HepG2 (cell line): ENCODE measurements at regions of chr13 and their contacts with region 1.

Region 1: GRCh38 chr13:25574437-25575411 is 202.9 kb downstream of the ATP8A2 start:
- DNase-seq: peak; percentile 74
- ATAC-seq: peak; percentile 97
- H3K4me3 ChIP-seq: no peak overlapping the region
- H3K27ac ChIP-seq: no peak overlapping the region
- H3K4me1 ChIP-seq: no peaks in the 10 kb centered on the region
- H3K27me3 ChIP-seq: 0 out of 5 replicates have a peak, but pooled peaks cover 2 to 3% of the 10 kb centered on the region in 2 experiments
- CTCF ChIP-seq: peak; percentile 83
- EP300 ChIP-seq: no peak
- POLR2A ChIP-seq: no peak
- RAD21 ChIP-seq: peak; percentile 61; the same call in 1 of the 2 replicates

Region 2: GRCh38 chr13:26062844-26063444 is 488.2 kb after region 1 on chr13:
- CTCF ChIA-PET with region 1: interaction called, 13 read pairs
- POLR2A ChIA-PET with region 1: no interaction called
- in situ Hi-C with region 1: loop called (anchors 5 kb)
- intact Hi-C with region 1: loop called (anchors 1 kb)
- DNase-seq: peak; percentile 59
- ATAC-seq: peak; percentile 76
- H3K4me3 ChIP-seq: no peak overlapping the region
- H3K27ac ChIP-seq: no peak overlapping the region
- H3K4me1 ChIP-seq: no peaks in the 10 kb centered on the region
- H3K27me3 ChIP-seq: peaks cover 1 to 17% of the 10 kb centered on the region in 2 experiments; a peak in 2 of 5 replicates
- CTCF ChIP-seq: peak; percentile 63
- EP300 ChIP-seq: no peak
- POLR2A ChIP-seq: no peak
- RAD21 ChIP-seq: 0 out of 2 replicates have a peak, but pooled peaks have one; percentile 13

Region 3: DNA sequence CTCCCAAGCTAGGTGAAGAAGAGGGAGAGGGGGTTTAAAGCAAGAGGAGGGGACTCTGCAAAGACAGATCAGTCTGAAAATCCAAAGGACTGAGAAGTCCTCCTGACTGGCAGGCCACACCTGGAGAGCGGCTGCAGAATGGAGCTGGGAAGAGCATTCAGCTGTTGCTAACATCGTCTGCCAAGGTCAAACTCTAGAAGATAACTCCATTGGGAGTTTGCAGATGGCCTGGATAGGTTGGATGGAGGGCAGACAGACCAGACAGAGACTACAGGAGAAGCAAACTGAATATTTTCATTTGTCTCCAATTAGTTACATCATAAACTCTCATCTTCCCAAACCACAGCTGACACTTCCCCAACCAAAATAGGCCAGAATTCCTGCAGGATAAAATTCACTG is 497.0 kb after region 1 on chr13:
- CTCF ChIA-PET with region 1: interaction called, 9 read pairs
- POLR2A ChIA-PET with region 1: no interaction called
- in situ Hi-C with region 1: no loop called
- intact Hi-C with region 1: loop called (anchors 1 kb)
- DNase-seq: no peak
- ATAC-seq: no peak
- H3K4me3 ChIP-seq: no peak overlapping the region
- H3K27ac ChIP-seq: no peak overlapping the region
- H3K4me1 ChIP-seq: peaks cover 12% of the 10 kb centered on the region
- H3K27me3 ChIP-seq: peaks cover 0 to 6% of the 10 kb centered on the region in 2 experiments; a peak in 2 of 5 replicates
- CTCF ChIP-seq: no peak
- EP300 ChIP-seq: no peak
- POLR2A ChIP-seq: no peak
- RAD21 ChIP-seq: no peak

Region 4: GRCh38 chr13:26502826-26503225 is 928.1 kb after region 1 on chr13:
- CTCF ChIA-PET with region 1: no interaction called
- POLR2A ChIA-PET with region 1: no interaction called
- in situ Hi-C with region 1: no loop called
- intact Hi-C with region 1: loop called (anchors 5 kb)
- DNase-seq: no peak
- ATAC-seq: peak; percentile 50; the same call in 2 of the 3 replicates
- H3K4me3 ChIP-seq: no peak overlapping the region
- H3K27ac ChIP-seq: no peak overlapping the region
- H3K4me1 ChIP-seq: no peaks in the 10 kb centered on the region
- H3K27me3 ChIP-seq: peaks cover 4 to 20% of the 10 kb centered on the region in 2 experiments; a peak in 3 of 5 replicates
- CTCF ChIP-seq: no peak
- EP300 ChIP-seq: no peak
- POLR2A ChIP-seq: no peak
- RAD21 ChIP-seq: no peak

Region 5: DNA sequence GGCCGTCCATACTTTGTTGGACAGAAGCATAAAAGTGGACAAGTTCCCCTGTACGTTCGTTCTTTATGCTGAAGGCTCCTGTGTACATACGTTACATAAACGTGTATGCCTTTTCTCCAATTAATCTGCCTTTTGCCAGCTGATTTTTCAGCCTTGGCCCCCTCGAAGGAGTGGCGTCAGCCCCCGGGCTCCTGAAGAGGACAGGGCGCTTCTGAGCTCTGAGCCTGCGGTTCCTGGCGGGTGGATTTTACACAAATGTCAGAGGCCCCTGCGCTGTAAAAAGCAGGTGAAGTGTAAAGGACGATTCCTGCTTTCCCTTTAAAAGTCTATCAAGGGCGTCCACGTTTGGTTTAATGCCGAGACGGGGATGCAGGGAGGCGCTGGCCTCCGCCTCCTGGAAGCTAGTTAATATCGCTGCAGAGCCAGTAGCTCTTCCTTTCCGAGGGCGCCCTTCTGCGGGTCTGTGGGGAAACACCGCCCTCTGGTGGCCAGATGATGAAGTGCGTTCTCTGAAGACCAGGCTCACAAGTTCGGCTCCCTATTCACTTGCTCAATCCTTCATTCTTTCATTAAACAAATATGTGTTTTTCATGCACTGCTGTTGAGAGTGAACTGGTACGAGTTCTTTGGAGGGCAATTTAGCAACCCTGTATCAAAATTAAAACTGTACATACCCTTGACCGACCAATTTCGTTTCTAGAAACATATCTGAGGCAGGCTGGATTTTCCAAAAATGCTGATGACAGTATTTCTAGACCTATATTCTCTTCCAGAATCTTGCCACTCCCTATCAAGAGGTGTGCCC is 1123.9 kb after region 1 on chr13:
- CTCF ChIA-PET with region 1: no interaction called
- POLR2A ChIA-PET with region 1: no interaction called
- in situ Hi-C with region 1: no loop called
- intact Hi-C with region 1: loop called (anchors 10 kb)
- DNase-seq: peak; percentile 66
- ATAC-seq: peak; percentile 81
- H3K4me3 ChIP-seq: peak overlapping the region; percentile 27 to 55 (median 27); a peak in 5 of 6 replicates
- H3K27ac ChIP-seq: no peak overlapping the region
- H3K4me1 ChIP-seq: no peaks in the 10 kb centered on the region
- H3K27me3 ChIP-seq: peaks cover 5 to 24% of the 10 kb centered on the region in 2 experiments; a peak in 4 of 5 replicates
- CTCF ChIP-seq: peak; percentile 92
- EP300 ChIP-seq: no peak
- POLR2A ChIP-seq: no peak
- RAD21 ChIP-seq: peak; percentile 89